ENCODE measurements at regions of chr3 and their contacts with region 1.

Region 1: DNA sequence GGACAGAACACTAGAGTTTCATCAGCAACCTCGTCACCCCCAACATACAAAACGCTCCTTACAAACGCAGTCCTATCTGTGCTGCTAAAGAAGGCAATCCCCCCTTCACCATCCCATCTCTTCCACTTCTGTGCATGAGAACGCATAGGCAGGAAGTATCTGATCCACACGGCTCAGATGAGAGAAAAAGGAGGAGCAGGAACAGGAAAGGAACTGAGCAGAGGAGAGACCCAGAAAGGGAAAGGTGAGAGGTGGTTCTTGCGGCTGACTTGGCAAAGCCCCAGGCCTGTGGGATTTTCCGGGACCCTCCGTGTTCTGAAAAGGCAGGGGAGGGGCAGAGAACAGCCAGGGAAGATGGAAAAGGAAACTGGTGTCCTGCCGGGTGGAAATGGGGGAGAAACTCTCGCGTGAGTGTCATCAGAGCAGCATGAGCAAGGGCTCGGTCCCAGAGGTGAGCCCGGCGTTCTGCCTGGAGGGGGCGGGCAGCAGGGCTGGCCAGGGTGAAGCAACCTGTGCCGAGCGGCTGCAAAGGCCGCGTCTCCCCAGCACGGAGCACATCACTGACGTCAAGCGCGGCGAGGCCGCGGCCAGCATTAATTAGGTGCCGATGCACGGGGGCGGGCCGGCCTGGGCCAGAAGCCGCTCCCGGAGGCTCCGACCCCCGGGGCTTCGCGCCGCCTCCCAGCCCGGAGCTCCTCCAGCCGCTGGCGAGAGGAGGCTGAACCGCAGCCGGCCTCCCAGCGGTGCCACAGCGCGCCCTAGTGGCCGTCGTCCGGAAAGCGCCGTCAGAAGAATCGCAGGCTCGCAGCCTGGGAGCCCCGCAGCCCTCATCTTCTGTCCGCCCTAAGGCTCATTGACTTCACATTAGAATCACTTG is 35.8 kb downstream of the CPN2 start:
- DNase-seq: peak; percentile 67 to 79 (median 77)
- H3K4me3 ChIP-seq: peak overlapping the region; percentile 73
- H3K4me3 Mint-ChIP-seq: peak overlapping the region; percentile 59 to 87 (median 79)
- H3K27ac ChIP-seq: no peak overlapping the region
- H3K27ac Mint-ChIP-seq: peak overlapping the region in 2 of 8 donors; percentile 25 to 35
- H3K4me1 ChIP-seq: peaks cover 12% of the 10 kb centered on the region
- H3K4me1 Mint-ChIP-seq: peaks cover 10 to 17% (median 11%) of the 10 kb centered on the region in 3 donors
- H3K27me3 ChIP-seq: peaks cover 23% of the 10 kb centered on the region
- H3K27me3 Mint-ChIP-seq: peaks cover 31 to 67% of the 10 kb centered on the region in 2 donors

Region 2: DNA sequence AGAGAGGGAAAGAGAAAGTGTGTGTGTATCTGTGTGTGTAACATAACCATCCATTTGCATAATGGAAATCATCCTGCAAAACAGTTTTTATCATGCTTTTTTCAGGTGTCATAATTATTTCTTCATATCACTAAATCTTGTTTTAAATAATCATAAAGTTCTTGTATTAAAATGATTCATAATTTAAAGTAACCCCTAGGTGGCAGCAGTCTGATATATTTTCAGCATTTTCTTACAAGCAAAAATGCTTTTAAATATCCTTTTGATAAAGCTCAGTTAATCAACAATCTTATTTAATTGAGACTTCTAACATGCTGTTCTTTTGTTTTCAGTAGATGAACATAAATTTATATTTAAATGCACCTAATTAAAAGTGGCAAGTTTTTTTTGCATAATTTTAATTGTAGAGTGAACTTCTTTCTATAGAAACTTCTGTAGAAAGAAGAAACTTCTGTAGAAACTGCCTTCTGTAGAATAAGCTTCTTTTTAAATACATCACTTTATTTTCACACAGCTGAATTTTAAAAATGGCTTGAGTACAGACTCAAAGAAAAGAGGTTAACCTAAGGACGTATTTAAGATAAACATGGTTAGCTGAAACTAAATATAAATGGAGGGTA is 649.8 kb before region 1 on chr3:
- CTCF ChIA-PET with region 1: interaction called, 72 read pairs
- POLR2A ChIA-PET with region 1: no interaction called
- DNase-seq: peak in 1 of 5 donors; percentile 26
- H3K4me3 ChIP-seq: no peak overlapping the region
- H3K4me3 Mint-ChIP-seq: no peak overlapping the region
- H3K27ac ChIP-seq: no peak overlapping the region
- H3K27ac Mint-ChIP-seq: no peak overlapping the region
- H3K4me1 ChIP-seq: no peaks in the 10 kb centered on the region
- H3K4me1 Mint-ChIP-seq: peaks cover 0 to 4% (median 0%) of the 10 kb centered on the region in 3 donors
- H3K27me3 ChIP-seq: no peaks in the 10 kb centered on the region
- H3K27me3 Mint-ChIP-seq: no peaks in the 10 kb centered on the region

Region 3: DNA sequence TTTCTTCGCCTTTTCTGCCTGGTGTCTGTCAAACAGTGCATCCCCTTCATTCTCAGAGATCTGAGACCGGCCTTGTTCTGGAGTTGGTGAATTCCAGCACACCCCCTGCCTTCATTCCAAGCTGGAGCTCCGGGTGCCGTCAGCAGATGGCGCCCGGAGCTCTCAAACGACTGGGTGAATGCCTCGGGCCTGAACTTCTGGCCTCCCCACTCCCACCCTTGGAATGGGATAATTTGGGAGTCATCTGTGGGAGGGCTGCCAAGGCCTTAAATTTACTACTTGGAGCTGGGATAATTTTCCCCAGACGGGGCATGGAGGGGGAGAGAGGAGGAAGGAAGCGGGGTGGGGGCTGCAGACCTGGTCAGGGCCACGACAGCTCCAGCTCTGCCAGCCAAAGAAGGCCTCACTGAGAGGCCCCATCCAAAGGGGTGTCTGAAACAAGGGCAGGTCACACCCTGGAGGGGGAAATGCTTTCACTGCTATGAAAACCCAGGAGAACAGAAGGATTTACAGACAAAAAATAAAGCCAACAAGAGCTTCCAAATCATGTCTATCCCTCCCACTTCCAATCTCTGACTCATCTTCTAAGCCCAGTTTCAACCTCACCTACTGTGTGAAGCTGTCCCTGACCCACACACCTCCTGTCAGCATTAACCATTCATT is 534.4 kb before region 1 on chr3:
- CTCF ChIA-PET with region 1: interaction called, 22 read pairs
- POLR2A ChIA-PET with region 1: no interaction called
- DNase-seq: no peak
- H3K4me3 ChIP-seq: no peak overlapping the region
- H3K4me3 Mint-ChIP-seq: no peak overlapping the region
- H3K27ac ChIP-seq: no peak overlapping the region
- H3K27ac Mint-ChIP-seq: peak overlapping the region in 1 of 8 donors; percentile 85
- H3K4me1 ChIP-seq: peaks cover 3% of the 10 kb centered on the region
- H3K4me1 Mint-ChIP-seq: peaks cover 0 to 4% (median 0%) of the 10 kb centered on the region in 3 donors
- H3K27me3 ChIP-seq: peaks cover 3% of the 10 kb centered on the region
- H3K27me3 Mint-ChIP-seq: peaks cover 11 to 48% of the 10 kb centered on the region in 2 donors